ENCODE measurements at regions of chr10 and their contacts with region 1.

Region 1: GRCh38 chr10:43138021-43138756 is at the start of gene CSGALNACT2:
- DNase-seq: peak; percentile 85
- H3K4me3 Mint-ChIP-seq: peak within 1 kb of the TSS; percentile 91
- H3K27ac Mint-ChIP-seq: peak within 1 kb of the TSS; percentile 92
- H3K4me1 Mint-ChIP-seq: peaks cover 22% of the 10 kb centered on the region
- H3K27me3 Mint-ChIP-seq: no peaks in the 10 kb centered on the region
- CTCF ChIP-seq: no peak
- total RNA-seq, gene CSGALNACT2: 30.0 and 32.8 TPM in 2 replicates

Region 2: GRCh38 chr10:42782446-42783180 is 355.6 kb before region 1 on chr10 and contains the start of gene BMS1:
- CTCF ChIA-PET with region 1: no interaction called
- POLR2A ChIA-PET with region 1: interaction called, 13 read pairs
- intact Hi-C with region 1: no loop called
- DNase-seq: peak; percentile 94
- H3K4me3 Mint-ChIP-seq: peak within 1 kb of the TSS; percentile 89
- H3K27ac Mint-ChIP-seq: peak within 1 kb of the TSS; percentile 90
- H3K4me1 Mint-ChIP-seq: peaks cover 5% of the 10 kb centered on the region
- H3K27me3 Mint-ChIP-seq: no peaks in the 10 kb centered on the region
- CTCF ChIP-seq: no peak
- total RNA-seq, gene BMS1: 26.9 and 28.1 TPM in 2 replicates

Region 3: GRCh38 chr10:42875792-42876460 is 262.3 kb before region 1 on chr10:
- CTCF ChIA-PET with region 1: no interaction called
- POLR2A ChIA-PET with region 1: no interaction called
- intact Hi-C with region 1: no loop called
- DNase-seq: no peak
- H3K4me3 Mint-ChIP-seq: no peak overlapping the region
- H3K27ac Mint-ChIP-seq: no peak overlapping the region
- H3K4me1 Mint-ChIP-seq: no peaks in the 10 kb centered on the region
- H3K27me3 Mint-ChIP-seq: no peaks in the 10 kb centered on the region
- CTCF ChIP-seq: no peak

Region 4: GRCh38 chr10:42911359-42911758 is 226.8 kb before region 1 on chr10:
- CTCF ChIA-PET with region 1: no interaction called
- POLR2A ChIA-PET with region 1: no interaction called
- intact Hi-C with region 1: no loop called
- DNase-seq: no peak
- H3K4me3 Mint-ChIP-seq: no peak overlapping the region
- H3K27ac Mint-ChIP-seq: no peak overlapping the region
- H3K4me1 Mint-ChIP-seq: no peaks in the 10 kb centered on the region
- H3K27me3 Mint-ChIP-seq: no peaks in the 10 kb centered on the region
- CTCF ChIP-seq: no peak

Region 5: GRCh38 chr10:43160046-43160918 is 22.1 kb after region 1 on chr10:
- CTCF ChIA-PET with region 1: no interaction called
- POLR2A ChIA-PET with region 1: interaction called, 14 read pairs
- intact Hi-C with region 1: no loop called
- DNase-seq: no peak
- H3K4me3 Mint-ChIP-seq: no peak overlapping the region
- H3K27ac Mint-ChIP-seq: peak overlapping the region; percentile 82
- H3K4me1 Mint-ChIP-seq: peaks cover 20% of the 10 kb centered on the region
- H3K27me3 Mint-ChIP-seq: no peaks in the 10 kb centered on the region
- CTCF ChIP-seq: no peak

Region 6: DNA sequence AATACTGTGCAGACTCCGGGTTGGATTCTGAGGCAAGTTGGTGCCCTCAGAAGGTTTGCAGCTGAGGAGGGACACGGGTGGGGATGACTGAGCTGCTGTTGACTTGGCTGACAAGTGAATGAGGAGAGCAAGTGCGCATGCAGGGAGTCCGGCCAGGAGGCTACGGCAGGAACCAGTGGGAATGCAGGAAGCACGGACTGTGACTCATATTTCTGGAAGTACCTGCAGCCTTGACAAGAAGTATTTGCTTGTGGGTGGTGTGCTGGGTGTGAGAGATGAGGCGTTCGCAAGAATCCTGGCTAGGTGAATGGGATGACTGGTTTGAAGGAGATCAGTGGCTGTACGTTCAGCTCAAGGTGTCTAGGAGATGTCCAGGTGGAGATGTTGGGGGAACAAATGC is 202.4 kb after region 1 on chr10:
- CTCF ChIA-PET with region 1: interaction called, 3 read pairs
- POLR2A ChIA-PET with region 1: interaction called, 10 read pairs
- intact Hi-C with region 1: no loop called
- DNase-seq: peak; percentile 89
- H3K4me3 Mint-ChIP-seq: no peak overlapping the region
- H3K27ac Mint-ChIP-seq: peak overlapping the region; percentile 25
- H3K4me1 Mint-ChIP-seq: peaks cover 26% of the 10 kb centered on the region
- H3K27me3 Mint-ChIP-seq: no peaks in the 10 kb centered on the region
- CTCF ChIP-seq: no peak

Region 7: DNA sequence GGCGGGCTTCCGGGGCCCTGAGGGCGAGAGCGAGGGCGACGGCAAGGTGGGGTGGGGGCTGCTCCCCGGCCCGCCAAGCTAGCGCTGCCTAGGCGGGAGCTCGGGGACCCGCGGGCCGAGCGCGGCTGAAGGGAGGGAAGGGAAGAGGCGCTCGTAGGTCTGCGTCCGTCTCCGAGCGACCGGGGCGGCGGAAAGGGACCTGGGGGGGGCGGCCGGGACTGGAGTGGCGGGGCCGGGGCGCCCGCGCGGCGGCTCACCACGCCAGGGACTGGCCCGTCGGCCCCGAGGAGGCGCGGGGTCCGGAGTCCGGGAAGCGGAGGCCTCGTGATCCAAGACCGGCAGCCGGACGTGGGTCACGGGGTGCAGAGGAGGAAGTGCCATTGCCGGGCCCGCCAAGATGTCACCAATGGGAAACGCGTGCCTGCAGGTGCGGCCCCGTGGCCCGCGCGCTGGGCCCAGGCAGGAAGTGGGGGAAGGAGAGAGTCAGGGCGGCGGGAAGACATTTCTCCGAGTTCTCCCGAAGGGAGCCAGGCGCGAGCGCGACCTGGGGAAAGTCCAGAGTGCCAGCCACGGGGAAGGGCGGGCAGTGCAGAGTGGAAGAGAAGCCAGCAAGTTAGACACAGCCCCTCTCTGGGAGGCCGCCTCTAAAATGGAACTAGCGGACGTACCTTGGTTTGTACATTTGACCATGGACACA is 258.9 kb after region 1 on chr10:
- CTCF ChIA-PET with region 1: no interaction called
- POLR2A ChIA-PET with region 1: interaction called, 30 read pairs
- intact Hi-C with region 1: no loop called
- DNase-seq: peak; percentile 92
- H3K4me3 Mint-ChIP-seq: peak overlapping the region; percentile 73
- H3K27ac Mint-ChIP-seq: peak overlapping the region; percentile 83
- H3K4me1 Mint-ChIP-seq: peaks cover 32% of the 10 kb centered on the region
- H3K27me3 Mint-ChIP-seq: no peaks in the 10 kb centered on the region
- CTCF ChIP-seq: no peak